HepG2 (cell line): ENCODE measurements at regions of chr9 and their contacts with region 1.

Region 1: DNA sequence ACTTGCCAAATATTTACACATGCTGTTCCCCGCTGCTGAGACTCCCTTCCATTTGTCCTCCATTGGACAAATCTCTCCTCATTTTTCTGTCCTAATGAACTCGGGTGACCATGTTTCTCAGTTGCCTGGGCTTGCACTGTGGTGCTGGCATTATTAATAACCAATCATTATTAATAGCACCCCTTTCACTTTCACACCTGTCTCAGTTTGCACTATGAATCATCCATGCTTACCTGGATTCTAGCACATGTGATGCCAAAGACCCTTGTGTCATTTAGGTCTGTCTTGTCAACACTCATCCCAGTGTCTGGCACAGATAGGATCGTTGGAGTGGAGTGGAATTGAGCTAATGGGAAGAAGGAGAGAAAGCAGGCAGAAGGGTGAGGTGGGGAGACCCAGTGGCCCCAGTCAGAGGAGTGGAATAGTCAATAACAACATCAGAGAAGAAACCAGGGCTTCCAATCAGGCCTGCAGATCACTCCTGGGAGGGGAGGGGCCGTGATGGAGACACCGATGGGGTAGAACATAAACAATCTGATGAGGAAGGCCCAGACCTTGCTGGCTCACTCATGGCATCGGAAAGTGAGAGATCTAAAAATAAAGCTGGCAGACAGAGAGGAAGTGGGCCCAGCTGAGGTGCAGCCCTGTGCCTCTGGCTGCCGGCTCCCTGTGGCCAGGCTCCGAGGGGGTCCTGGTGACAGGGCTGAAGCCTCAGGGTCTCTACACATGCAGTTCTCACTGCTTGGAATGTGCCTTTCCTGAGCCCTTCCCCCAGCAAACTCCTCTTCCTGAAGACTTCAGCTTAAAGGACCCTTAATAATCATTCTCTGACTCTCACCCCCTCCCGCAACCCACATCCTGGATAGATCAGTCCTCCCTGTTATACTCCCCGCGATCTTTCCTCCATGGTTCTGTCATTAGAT is 33.5 kb upstream of the CRB2 start:
- DNase-seq: no peak
- ATAC-seq: no peak
- H3K4me3 ChIP-seq: no peak overlapping the region
- H3K27ac ChIP-seq: no peak overlapping the region
- H3K4me1 ChIP-seq: peaks cover 97% of the 10 kb centered on the region
- H3K27me3 ChIP-seq: peaks cover 0 to 9% of the 10 kb centered on the region in 2 experiments; a peak in 2 of 5 replicates
- CTCF ChIP-seq: no peak
- EP300 ChIP-seq: no peak
- POLR2A ChIP-seq: no peak
- RAD21 ChIP-seq: no peak

Region 2: DNA sequence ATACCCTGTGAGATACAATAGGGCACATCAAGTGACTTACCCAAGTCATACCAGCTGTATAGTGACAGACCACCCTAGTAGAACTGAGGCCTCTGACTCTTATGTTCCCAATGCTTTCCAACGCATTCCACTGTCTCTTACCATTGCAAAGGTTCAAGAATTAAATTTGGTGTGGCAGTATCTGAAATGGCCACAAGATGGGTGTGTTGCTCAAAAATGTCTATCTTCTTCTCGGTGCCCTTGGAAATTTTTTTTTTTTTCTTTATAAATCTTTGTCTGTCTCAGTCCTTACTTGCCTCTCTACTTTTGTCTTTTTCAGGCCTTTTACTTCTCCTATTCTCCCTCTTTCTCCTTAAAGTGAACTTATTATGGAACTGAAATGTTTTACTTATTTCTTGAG is 240.7 kb before region 1 on chr9:
- CTCF ChIA-PET with region 1: no interaction called
- POLR2A ChIA-PET with region 1: no interaction called
- in situ Hi-C with region 1: no loop called
- intact Hi-C with region 1: loop called (anchors 10 kb)
- DNase-seq: peak; percentile 48
- ATAC-seq: peak; percentile 62; the same call in 2 of the 3 replicates
- H3K4me3 ChIP-seq: no peak overlapping the region
- H3K27ac ChIP-seq: no peak overlapping the region
- H3K4me1 ChIP-seq: peaks cover 22% of the 10 kb centered on the region
- H3K27me3 ChIP-seq: no peaks in the 10 kb centered on the region
- CTCF ChIP-seq: peak; percentile 69
- EP300 ChIP-seq: no peak
- POLR2A ChIP-seq: no peak
- RAD21 ChIP-seq: peak; percentile 48; the same call in 1 of the 2 replicates

Region 3: GRCh38 chr9:123268240-123268949 is 54.1 kb before region 1 on chr9 and contains the start of gene STRBP:
- CTCF ChIA-PET with region 1: no interaction called
- POLR2A ChIA-PET with region 1: no interaction called
- in situ Hi-C with region 1: no loop called
- intact Hi-C with region 1: loop called (anchors 10 kb)
- DNase-seq: peak; percentile 78
- ATAC-seq: peak; percentile 90
- H3K4me3 ChIP-seq: peak within 1 kb of the TSS; percentile 83 to 96 (median 89)
- H3K27ac ChIP-seq: peak within 1 kb of the TSS; percentile 54
- H3K4me1 ChIP-seq: peaks cover 50% of the 10 kb centered on the region
- H3K27me3 ChIP-seq: no peaks in the 10 kb centered on the region; a peak in 1 of 5 replicates
- CTCF ChIP-seq: peak; percentile 25; the same call in 1 of the 2 replicates
- EP300 ChIP-seq: no peak
- POLR2A ChIP-seq: peak in 1 of 2 experiments; percentile 59; a peak in 1 of 4 replicates
- RAD21 ChIP-seq: peak; percentile 26; the same call in 1 of the 2 replicates
- total RNA-seq, gene STRBP: 38.5 and 46.1 TPM in 2 replicates

Region 4: GRCh38 chr9:123364241-123364824 is 41.8 kb after region 1 on chr9:
- CTCF ChIA-PET with region 1: no interaction called
- POLR2A ChIA-PET with region 1: no interaction called
- in situ Hi-C with region 1: no loop called
- intact Hi-C with region 1: loop called (anchors 1 kb)
- DNase-seq: no peak
- ATAC-seq: no peak
- H3K4me3 ChIP-seq: no peak overlapping the region
- H3K27ac ChIP-seq: no peak overlapping the region
- H3K4me1 ChIP-seq: peaks cover 53% of the 10 kb centered on the region
- H3K27me3 ChIP-seq: peaks cover 4 to 22% of the 10 kb centered on the region in 2 experiments; a peak in 4 of 5 replicates
- CTCF ChIP-seq: no peak
- EP300 ChIP-seq: no peak
- POLR2A ChIP-seq: no peak
- RAD21 ChIP-seq: no peak